GM12878 (cell line): ENCODE measurements at regions of chr7 and their contacts with region 1.

Region 1: GRCh38 chr7:117283371-117283770 is 39.5 kb downstream of the WNT2 start:
- DNase-seq: no peak
- ATAC-seq: no peak
- H3K4me3 ChIP-seq: no peak overlapping the region
- H3K27ac ChIP-seq: no peak overlapping the region
- H3K4me1 ChIP-seq: no peaks in the 10 kb centered on the region
- H3K27me3 ChIP-seq: no peaks in the 10 kb centered on the region
- CTCF ChIP-seq: no peak
- EP300 ChIP-seq: no peak
- POLR2A ChIP-seq: no peak
- RAD21 ChIP-seq: no peak

Region 2: DNA sequence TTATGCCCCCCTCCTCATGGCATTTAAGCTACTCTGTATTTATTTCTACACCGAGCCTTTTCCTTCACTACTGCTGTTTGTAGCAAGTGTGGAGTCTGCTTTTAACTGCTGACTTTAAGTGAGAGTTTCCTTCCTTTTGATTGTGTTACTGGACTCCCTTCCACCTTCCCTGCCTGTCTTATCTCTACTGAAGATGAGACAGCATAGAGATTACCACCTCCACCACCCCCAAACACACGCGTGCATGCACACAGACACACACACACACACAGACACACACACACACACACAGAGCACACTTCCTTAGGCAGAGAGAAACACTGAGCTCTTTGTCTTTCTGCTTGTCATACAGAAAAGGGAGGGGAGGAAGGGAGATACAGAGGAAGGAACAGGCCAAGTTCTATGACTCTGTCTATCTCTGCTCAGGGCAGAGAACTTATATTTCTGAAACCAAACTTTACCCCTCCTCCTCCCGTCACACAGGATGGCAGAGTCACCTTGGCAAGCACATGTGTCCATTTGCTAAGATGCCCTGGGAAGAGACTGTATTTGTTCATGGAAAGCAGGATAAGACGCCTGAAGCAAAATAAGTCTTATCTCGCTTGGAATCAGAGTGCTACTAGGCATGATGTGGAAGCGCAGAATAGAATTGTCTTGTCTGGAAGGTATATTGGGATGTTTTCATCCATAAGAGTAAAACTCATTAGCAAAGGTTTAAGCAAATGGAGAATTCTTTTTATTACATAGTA is 865.6 kb before region 1 on chr7:
- CTCF ChIA-PET with region 1: no interaction called
- POLR2A ChIA-PET with region 1: no interaction called
- RAD21 ChIA-PET with region 1: no interaction called
- SMC1A ChIA-PET with region 1: no interaction called
- in situ Hi-C with region 1: no loop called
- intact Hi-C with region 1: no loop called
- DNase-seq: no peak
- ATAC-seq: no peak
- H3K4me3 ChIP-seq: no peak overlapping the region
- H3K27ac ChIP-seq: no peak overlapping the region
- H3K4me1 ChIP-seq: no peaks in the 10 kb centered on the region
- H3K27me3 ChIP-seq: peaks cover 0 to 3% of the 10 kb centered on the region in 2 experiments; a peak in 1 of 4 replicates
- CTCF ChIP-seq: no peak
- EP300 ChIP-seq: no peak
- POLR2A ChIP-seq: no peak
- RAD21 ChIP-seq: no peak

Region 3: GRCh38 chr7:117127585-117128168 is 155.7 kb before region 1 on chr7:
- CTCF ChIA-PET with region 1: no interaction called
- POLR2A ChIA-PET with region 1: no interaction called
- RAD21 ChIA-PET with region 1: no interaction called
- SMC1A ChIA-PET with region 1: no interaction called
- in situ Hi-C with region 1: no loop called
- intact Hi-C with region 1: no loop called
- DNase-seq: peak; percentile 23
- ATAC-seq: peak; percentile 82
- H3K4me3 ChIP-seq: no peak overlapping the region
- H3K27ac ChIP-seq: no peak overlapping the region
- H3K4me1 ChIP-seq: peaks cover 10% of the 10 kb centered on the region
- H3K27me3 ChIP-seq: no peaks in the 10 kb centered on the region
- CTCF ChIP-seq: peak; percentile 56 to 66 (median 64); a peak in 5 of 6 replicates
- EP300 ChIP-seq: no peak
- POLR2A ChIP-seq: no peak
- RAD21 ChIP-seq: peak; percentile 72

Region 4: DNA sequence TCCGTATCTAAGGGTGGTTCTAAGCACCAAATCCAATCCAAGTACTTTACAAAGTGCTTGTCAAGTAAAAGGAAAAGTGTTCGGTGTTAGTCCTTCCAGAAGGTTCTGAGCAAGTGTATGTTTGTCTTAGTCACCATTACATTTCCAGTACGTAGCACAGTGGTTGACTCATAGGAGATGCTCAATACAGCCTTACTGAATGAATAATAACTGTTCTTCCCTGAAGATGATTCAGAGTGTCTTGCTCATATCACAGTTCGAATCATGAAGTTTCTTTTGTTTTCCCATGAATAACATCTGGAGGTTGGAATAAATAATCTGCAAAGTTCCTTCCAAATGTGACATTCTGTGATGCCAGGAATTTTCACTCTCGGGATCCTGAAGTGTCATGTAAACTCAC is 14.0 kb before region 1 on chr7:
- CTCF ChIA-PET with region 1: interaction called, 16 read pairs
- POLR2A ChIA-PET with region 1: no interaction called
- RAD21 ChIA-PET with region 1: no interaction called
- SMC1A ChIA-PET with region 1: no interaction called
- in situ Hi-C with region 1: no loop called
- intact Hi-C with region 1: loop called (anchors 1 kb)
- DNase-seq: no peak
- ATAC-seq: peak; percentile 28; the same call in 1 of the 3 replicates
- H3K4me3 ChIP-seq: no peak overlapping the region
- H3K27ac ChIP-seq: no peak overlapping the region
- H3K4me1 ChIP-seq: no peaks in the 10 kb centered on the region
- H3K27me3 ChIP-seq: no peaks in the 10 kb centered on the region
- CTCF ChIP-seq: no peak
- EP300 ChIP-seq: no peak
- POLR2A ChIP-seq: no peak
- RAD21 ChIP-seq: no peak